ENCODE measurements at regions of chr12 and their contacts with region 1.

Region 1: GRCh38 chr12:123271001-123271729 is 491 bp downstream of the CDK2AP1 start:
- DNase-seq: peak; percentile 40
- H3K4me3 ChIP-seq: peak overlapping the region; percentile 60 to 78 (median 77)
- H3K27ac ChIP-seq: peak overlapping the region; percentile 56
- H3K4me1 ChIP-seq: peaks cover 22% of the 10 kb centered on the region
- H3K27me3 ChIP-seq: no peaks in the 10 kb centered on the region
- CTCF ChIP-seq: peak; percentile 25 to 49

Region 2: GRCh38 chr12:123043536-123044001 is 227.6 kb before region 1 on chr12:
- CTCF ChIA-PET with region 1: no interaction called
- dilution Hi-C with region 1: no loop called
- in situ Hi-C with region 1: no loop called
- intact Hi-C with region 1: loop called (anchors 1 kb)
- DNase-seq: peak; percentile 83
- H3K4me3 ChIP-seq: no peak overlapping the region
- H3K27ac ChIP-seq: no peak overlapping the region
- H3K4me1 ChIP-seq: peaks cover 8% of the 10 kb centered on the region
- H3K27me3 ChIP-seq: no peaks in the 10 kb centered on the region
- CTCF ChIP-seq: peak; percentile 65 to 84

Region 3: DNA sequence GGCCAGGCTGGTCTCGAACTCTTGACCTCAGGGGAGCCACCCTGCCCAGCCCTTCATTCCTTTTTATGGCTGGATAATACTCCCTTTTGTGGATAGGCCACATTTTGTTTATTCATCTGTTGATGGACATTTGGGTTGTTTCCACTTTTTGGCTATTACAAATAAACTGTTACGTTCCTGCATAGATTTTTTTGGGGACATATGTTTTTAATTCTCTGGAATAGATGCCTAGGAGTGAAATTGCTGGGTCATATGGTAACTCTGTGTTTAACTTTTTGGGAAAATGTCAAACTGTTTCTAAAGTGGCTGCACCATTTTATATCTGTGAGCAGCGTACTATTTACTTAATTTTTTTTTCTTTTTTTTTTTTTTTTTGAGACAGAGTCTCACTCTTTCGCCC is 122.6 kb after region 1 on chr12:
- CTCF ChIA-PET with region 1: interaction called, 20 read pairs
- dilution Hi-C with region 1: no loop called
- in situ Hi-C with region 1: no loop called
- intact Hi-C with region 1: no loop called
- DNase-seq: no peak
- H3K4me3 ChIP-seq: no peak overlapping the region
- H3K27ac ChIP-seq: no peak overlapping the region
- H3K4me1 ChIP-seq: peaks cover 12% of the 10 kb centered on the region
- H3K27me3 ChIP-seq: no peaks in the 10 kb centered on the region
- CTCF ChIP-seq: no peak

Region 4: DNA sequence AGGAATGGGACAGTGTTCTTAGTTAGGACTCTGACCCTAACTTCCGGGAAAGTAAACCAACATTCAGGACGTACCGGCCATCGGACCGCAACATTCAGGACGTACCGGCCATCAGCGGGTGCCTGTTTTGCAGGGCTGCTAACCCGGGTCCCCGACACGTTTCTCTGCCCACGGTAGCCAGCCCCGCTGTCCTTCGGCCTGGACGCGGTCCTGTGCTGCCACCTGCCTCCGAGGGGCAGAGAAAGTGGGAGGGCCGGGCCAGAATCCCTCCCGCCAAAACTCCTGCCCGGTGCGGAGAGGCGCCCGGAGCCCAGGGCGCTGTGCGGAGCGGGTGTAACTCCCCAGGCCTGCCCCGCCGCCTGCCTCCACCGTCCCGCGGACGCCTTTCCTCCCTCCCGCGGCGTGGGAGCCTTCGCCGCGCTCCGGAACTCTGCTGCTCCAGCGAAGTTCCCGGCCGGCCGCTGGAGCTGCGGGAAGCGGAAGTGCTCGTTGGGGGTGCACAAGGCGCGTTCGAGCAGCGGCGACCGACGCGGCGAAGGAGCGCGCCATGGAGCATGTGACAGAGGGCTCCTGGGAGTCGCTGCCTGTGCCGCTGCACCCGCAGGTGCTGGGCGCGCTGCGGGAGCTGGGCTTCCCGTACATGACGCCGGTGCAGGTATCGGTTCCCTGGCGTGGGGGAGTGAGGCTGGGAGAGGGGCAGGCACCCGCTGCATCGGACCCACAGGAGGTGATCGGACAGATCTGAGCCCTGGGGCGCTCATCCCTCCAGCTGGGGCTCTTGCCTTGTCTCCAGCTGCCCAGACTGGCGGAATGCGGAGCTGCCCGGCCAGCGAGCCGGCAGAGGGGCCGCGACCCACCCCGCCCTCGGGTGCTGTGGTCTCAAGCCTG is 330.7 kb after region 1 on chr12 and contains the start of gene DDX55:
- CTCF ChIA-PET with region 1: no interaction called
- dilution Hi-C with region 1: no loop called
- in situ Hi-C with region 1: no loop called
- intact Hi-C with region 1: loop called (anchors 1 kb)
- DNase-seq: peak; percentile 81
- H3K4me3 ChIP-seq: peak within 1 kb of the TSS; percentile 89 to 100 (median 98)
- H3K27ac ChIP-seq: peak within 1 kb of the TSS; percentile 57
- H3K4me1 ChIP-seq: peaks cover 4% of the 10 kb centered on the region
- H3K27me3 ChIP-seq: no peaks in the 10 kb centered on the region
- CTCF ChIP-seq: peak; percentile 6 to 62
- total RNA-seq, gene DDX55: 19.5 to 25.8 TPM

Region 5: DNA sequence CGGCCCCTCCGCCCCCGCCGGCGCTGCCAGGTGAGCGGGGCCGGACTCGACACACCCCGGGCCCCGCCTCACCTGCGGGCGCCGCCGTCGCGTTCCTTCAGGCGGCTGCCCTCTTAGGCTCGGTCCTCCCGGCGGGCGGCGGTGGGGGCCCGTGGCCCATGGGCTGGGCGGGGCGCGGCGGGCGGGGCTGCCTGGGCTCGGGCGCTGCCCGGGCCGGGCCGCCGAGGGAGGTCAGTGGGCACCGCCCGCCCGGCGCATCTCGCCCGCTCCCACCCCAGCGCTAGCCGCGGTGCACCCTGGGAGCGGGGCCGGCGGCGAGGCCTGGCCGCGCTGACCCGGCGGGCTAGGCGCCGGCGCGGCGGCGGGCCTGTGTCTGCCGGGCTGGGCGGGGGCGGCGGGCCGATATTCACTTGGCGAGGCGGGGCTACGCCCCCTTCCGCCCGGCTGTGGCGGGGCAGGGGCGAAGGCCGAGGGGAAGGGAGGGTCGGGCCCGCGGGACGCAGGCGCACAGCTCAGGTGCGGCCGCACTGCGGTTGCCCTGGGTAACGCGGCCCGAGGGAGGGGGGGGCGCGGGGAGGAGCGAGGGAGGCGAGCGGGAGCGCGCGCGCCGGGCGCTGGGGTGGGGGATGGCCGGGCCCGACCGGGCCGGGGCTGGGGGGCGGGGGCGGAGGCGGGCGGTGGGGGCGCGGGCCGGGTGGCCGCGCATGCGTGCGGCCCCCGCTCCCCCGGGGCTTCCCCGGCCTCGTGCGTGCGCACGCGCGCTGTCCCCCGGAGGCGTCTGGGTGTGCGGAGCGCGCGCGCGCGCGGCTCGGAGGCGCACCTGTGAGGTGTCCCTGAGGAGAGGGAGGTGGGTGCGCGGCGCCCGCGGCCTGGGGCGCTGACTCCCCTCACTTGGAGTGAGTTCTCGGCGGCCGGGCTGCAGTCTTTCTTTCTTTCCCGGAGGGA is 701.6 kb after region 1 on chr12 and contains the starts of genes CCDC92 and ZNF664:
- CTCF ChIA-PET with region 1: no interaction called
- dilution Hi-C with region 1: no loop called
- in situ Hi-C with region 1: no loop called
- intact Hi-C with region 1: loop called (anchors 10 kb)
- DNase-seq: peak; percentile 89
- H3K4me3 ChIP-seq: peak within 1 kb of the TSS; percentile 81 to 98 (median 85)
- H3K27ac ChIP-seq: peak within 1 kb of the TSS; percentile 57
- H3K4me1 ChIP-seq: peaks cover 18% of the 10 kb centered on the region
- H3K27me3 ChIP-seq: no peaks in the 10 kb centered on the region
- CTCF ChIP-seq: peak in 1 of 2 donors; percentile 31
- total RNA-seq, gene CCDC92: 6.8 to 29.7 TPM
- total RNA-seq, gene ZNF664: 56.2 to 62.6 TPM

Measured in mammary epithelial cell (primary cell).